HCT116 (cell line): ENCODE measurements at regions of chr2 and their contacts with region 1.

Region 1: DNA sequence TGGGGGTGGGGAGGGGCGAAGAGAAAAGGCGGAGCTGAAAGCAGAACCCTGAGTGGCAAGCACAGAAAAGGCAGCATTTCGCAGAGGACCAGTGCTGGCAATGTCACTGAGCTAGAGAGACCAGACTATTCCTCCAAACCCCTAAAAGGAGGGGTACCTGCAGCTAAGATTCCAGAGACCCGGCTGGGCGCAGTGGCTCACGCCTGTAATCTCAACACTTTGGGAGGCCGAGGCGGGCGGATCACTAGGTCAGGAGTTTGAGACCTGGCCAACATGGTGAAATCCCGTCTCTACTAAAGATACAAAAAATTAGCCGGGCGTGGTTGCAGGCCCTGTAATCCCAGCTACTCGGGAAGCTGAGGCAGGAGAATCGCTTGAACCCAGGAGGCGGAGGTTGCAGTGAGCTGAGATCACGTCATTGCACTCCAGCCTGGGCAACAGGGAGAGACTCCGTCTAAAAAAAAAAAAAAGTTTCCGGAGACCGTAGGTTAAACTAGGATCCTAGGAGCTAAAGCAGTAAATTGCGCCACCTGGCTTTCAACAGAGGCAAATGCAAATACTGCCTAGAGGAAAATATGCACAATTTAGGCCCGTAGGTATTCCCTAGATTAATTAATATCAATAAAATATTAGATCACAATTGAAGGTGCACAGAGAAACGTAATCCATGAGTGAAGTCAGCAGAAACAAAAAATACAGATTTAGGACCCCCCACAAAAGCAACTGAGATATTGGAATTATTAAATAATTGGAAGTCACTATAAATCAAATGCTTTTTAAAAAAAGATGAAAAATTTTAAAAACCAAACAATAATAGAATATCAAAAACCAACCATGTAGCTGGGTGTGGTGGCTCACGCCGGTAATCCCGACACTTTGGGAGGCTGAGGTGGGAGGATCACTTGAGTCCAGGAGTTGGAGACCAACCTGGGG is 4.9 kb downstream of the UCN start:
- DNase-seq: peak; percentile 70
- ATAC-seq: peak; percentile 83
- H3K4me3 ChIP-seq: peak overlapping the region; percentile 38 to 51
- H3K27ac ChIP-seq: no peak overlapping the region; the same call in 1 of the 2 replicates
- H3K4me1 ChIP-seq: peaks cover 0 to 8% of the 10 kb centered on the region in 2 experiments; a peak in 3 of 4 replicates
- H3K27me3 ChIP-seq: no peaks in the 10 kb centered on the region
- CTCF ChIP-seq: peak; percentile 73 to 93 (median 81)
- POLR2A ChIP-seq: no peak
- RAD21 ChIP-seq: peak; percentile 86

Region 2: DNA sequence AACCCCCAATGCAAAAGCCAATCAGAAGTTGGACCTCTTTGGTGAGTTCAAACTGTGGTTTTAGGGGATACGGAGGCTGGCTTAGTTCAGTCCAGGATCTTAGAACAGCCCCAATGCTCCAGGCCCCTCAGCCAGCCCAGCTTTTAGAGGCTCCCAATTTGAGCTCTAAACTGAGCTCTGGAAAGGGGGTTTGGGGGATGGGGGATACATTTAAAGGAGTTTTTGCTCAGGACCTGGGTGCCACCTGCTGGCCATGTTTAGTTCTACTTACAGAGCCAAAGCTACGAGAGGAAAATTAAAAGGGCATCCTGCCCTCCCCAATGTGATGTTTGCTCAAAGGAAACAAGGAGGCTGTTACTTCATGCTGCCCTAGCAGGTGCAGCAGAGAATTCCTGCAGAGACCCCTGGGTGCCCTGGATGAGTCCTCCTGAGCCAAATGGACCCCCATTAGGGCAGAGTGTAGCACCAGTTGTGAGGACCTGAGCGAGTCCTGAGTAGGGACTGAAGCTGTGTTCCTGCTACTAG is 286.5 kb before region 1 on chr2:
- CTCF ChIA-PET with region 1: interaction called, 4 read pairs
- POLR2A ChIA-PET with region 1: no interaction called
- RAD21 ChIA-PET with region 1: no interaction called
- intact Hi-C with region 1: loop called (anchors 1 kb)
- DNase-seq: peak; percentile 50
- ATAC-seq: peak; percentile 74
- H3K4me3 ChIP-seq: no peak overlapping the region
- H3K27ac ChIP-seq: no peak overlapping the region
- H3K4me1 ChIP-seq: peaks cover 25 to 50% of the 10 kb centered on the region in 2 experiments
- H3K27me3 ChIP-seq: no peaks in the 10 kb centered on the region
- CTCF ChIP-seq: peak; percentile 68 to 85 (median 84)
- POLR2A ChIP-seq: no peak
- RAD21 ChIP-seq: peak; percentile 92

Region 3: DNA sequence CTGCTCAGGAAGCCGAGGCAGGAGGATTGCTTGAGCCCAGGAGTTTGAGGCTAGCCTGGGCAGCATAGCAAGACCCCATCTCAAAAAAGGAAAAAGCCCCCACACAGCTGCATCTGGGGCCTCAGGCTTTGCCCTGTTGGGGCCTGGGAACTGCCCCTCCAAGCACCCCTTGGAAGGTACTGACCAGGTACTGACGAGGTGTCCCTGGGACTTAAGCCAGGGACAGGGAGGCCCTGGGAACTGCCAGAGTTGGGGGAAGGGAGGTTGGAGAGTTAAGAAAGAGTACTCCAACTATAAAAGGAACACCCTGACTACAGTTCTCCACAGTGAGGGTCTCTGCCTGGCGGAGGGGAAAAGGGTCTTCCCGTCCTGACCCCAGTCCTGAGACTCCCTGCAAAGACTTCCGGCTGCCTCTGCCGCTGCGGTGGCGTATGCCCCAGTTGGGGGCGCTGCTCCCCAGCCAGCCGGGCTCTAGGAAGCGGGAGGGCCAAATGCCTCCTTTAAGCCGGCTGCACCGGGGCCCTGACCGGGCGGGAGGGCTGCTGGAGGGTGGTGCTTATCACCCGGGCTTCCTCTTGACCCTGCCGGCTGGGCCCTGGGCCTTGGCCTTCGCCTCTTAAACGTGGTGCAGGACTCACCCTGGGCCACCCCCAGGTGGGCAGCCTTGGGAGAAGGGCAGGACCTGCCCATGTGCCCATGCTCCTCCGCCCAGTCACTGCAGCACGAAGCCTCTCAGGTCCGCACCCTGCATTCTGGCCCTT is 53.3 kb before region 1 on chr2:
- CTCF ChIA-PET with region 1: interaction called, 8 read pairs
- POLR2A ChIA-PET with region 1: no interaction called
- RAD21 ChIA-PET with region 1: no interaction called
- intact Hi-C with region 1: loop called (anchors 1 kb)
- DNase-seq: peak; percentile 23
- ATAC-seq: peak; percentile 89
- H3K4me3 ChIP-seq: no peak overlapping the region
- H3K27ac ChIP-seq: no peak overlapping the region
- H3K4me1 ChIP-seq: peaks cover 0 to 10% of the 10 kb centered on the region in 2 experiments; a peak in 2 of 4 replicates
- H3K27me3 ChIP-seq: no peaks in the 10 kb centered on the region
- CTCF ChIP-seq: peak; percentile 91 to 95 (median 94)
- POLR2A ChIP-seq: no peak
- RAD21 ChIP-seq: peak; percentile 95

Region 4: GRCh38 chr2:27281855-27282559 is 21.4 kb before region 1 on chr2 and contains the start of gene TRIM54:
- CTCF ChIA-PET with region 1: interaction called, 19 read pairs
- POLR2A ChIA-PET with region 1: no interaction called
- RAD21 ChIA-PET with region 1: interaction called in 1 of 2 experiments, 3 read pairs
- intact Hi-C with region 1: no loop called
- DNase-seq: no peak
- ATAC-seq: no peak
- H3K4me3 ChIP-seq: no peak within 1 kb of the TSS
- H3K27ac ChIP-seq: no peak within 1 kb of the TSS
- H3K4me1 ChIP-seq: peaks cover 2 to 28% of the 10 kb centered on the region in 2 experiments
- H3K27me3 ChIP-seq: no peaks in the 10 kb centered on the region
- CTCF ChIP-seq: no peak
- POLR2A ChIP-seq: no peak
- RAD21 ChIP-seq: no peak
- total RNA-seq, gene TRIM54: 2.0 TPM

Region 5: GRCh38 chr2:27322766-27323595 is 19.6 kb after region 1 on chr2 and contains the start of gene MPV17:
- CTCF ChIA-PET with region 1: interaction called, 16 read pairs
- POLR2A ChIA-PET with region 1: interaction called, 5 read pairs
- RAD21 ChIA-PET with region 1: no interaction called
- intact Hi-C with region 1: no loop called
- DNase-seq: peak; percentile 88
- ATAC-seq: peak; percentile 82
- H3K4me3 ChIP-seq: peak within 1 kb of the TSS; percentile 85 to 90
- H3K27ac ChIP-seq: peak within 1 kb of the TSS; percentile 90
- H3K4me1 ChIP-seq: peaks cover 24 to 40% of the 10 kb centered on the region in 2 experiments
- H3K27me3 ChIP-seq: no peaks in the 10 kb centered on the region
- CTCF ChIP-seq: no peak
- POLR2A ChIP-seq: peak; percentile 84
- RAD21 ChIP-seq: no peak
- total RNA-seq, gene MPV17: 55.4 TPM

Region 6: GRCh38 chr2:28475088-28475605 is 1171.8 kb after region 1 on chr2:
- CTCF ChIA-PET with region 1: no interaction called
- POLR2A ChIA-PET with region 1: no interaction called
- RAD21 ChIA-PET with region 1: no interaction called
- intact Hi-C with region 1: no loop called
- DNase-seq: no peak
- ATAC-seq: no peak
- H3K4me3 ChIP-seq: no peak overlapping the region
- H3K27ac ChIP-seq: no peak overlapping the region
- H3K4me1 ChIP-seq: peaks cover 0 to 11% of the 10 kb centered on the region in 2 experiments; a peak in 1 of 4 replicates
- H3K27me3 ChIP-seq: no peaks in the 10 kb centered on the region
- CTCF ChIP-seq: no peak
- POLR2A ChIP-seq: no peak
- RAD21 ChIP-seq: no peak